Activated CD8-positive, alpha-beta memory T cell treated with anti-CD3 and anti-CD28 coated beads, Interleukin-2, amount 10 ng/mL, durations not matched to agents 7 days and 5 days (primary cell): ENCODE measurements at regions of chr10 and their contacts with region 1.

Region 1: GRCh38 chr10:95246579-95247051 is 44.2 kb downstream of the PDLIM1 start:
- DNase-seq: peak; percentile 82
- ATAC-seq: peak; percentile 70
- H3K4me3 Mint-ChIP-seq: no peak overlapping the region
- H3K27ac Mint-ChIP-seq: peak overlapping the region; percentile 16
- H3K4me1 Mint-ChIP-seq: peaks cover 37% of the 10 kb centered on the region
- H3K27me3 Mint-ChIP-seq: peaks cover 13% of the 10 kb centered on the region

Region 2: DNA sequence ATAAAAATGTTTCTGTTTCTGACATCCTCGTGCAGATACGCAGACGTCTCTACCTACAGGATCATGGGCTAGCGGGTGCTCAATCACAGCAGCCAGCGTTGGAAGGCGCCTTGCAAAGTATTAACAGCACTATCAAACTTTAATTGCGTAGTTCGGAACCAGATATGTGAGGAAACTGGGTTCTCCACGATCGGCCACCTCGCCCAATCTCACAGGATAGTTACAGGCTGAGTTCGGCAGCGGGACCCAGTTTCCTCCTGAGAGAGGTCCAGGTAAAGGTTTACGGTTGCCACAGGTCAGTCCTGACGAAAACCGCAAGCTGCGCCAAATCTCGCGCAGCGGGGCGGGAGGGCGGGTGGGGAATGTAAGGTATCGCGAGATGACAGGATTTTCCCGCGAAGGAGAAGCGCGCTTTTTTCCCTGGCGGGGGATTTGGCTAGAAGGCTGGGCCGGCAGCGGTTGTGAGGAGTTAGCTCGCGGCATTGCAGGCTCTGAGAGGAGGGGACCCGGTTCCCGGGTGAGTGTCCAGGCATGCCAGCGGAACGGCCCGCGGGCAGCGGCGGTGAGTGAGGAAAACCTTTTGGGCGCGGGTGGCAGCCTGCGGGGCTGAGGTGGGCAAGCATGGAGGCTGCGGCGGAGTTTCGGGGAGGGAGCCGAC is 701.1 kb before region 1 on chr10 and contains the start of gene HELLS:
- CTCF ChIA-PET with region 1: no interaction called
- DNase-seq: peak; percentile 87
- ATAC-seq: peak; percentile 78
- H3K4me3 Mint-ChIP-seq: peak within 1 kb of the TSS; percentile 99
- H3K27ac Mint-ChIP-seq: peak within 1 kb of the TSS; percentile 97
- H3K4me1 Mint-ChIP-seq: peaks cover 28% of the 10 kb centered on the region
- H3K27me3 Mint-ChIP-seq: peaks cover 15% of the 10 kb centered on the region
- total RNA-seq, gene HELLS: 152 to 157 TPM

Region 3: DNA sequence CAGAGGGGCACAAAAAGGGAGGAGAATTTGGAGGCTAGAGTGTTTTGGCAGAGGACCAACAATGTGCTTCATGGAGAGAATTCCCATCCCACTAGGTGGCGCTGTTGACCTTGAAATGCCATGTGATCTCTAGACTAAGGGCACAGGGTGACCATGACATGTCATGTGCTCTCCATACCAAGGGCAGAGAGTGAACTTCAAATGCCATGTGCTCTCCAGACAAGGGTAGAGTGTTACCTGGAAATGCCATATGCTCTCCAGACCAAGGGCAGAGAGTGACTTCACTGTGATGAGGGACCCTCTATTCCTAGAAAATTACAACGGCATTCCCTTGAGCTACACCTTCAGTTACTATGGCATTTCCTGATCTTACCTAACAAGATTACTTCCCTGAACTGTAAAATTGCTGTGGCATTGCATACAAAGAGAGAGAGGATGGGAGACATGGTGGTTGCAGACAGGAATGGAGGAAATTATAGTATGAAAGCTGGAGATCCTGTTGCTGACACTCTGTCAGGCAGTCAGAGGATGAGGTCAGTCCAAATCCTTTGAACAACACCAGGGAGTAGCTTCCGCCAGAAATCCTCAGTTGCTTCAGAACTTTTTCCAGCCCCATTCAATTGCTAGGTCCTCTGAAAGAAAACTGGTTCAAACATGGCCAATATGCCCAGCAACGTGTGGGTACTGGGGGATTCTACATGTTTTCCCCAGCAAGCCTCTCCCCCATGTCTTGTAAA is 113.4 kb before region 1 on chr10:
- CTCF ChIA-PET with region 1: interaction called, 10 read pairs
- DNase-seq: peak; percentile 86
- ATAC-seq: peak; percentile 84
- H3K4me3 Mint-ChIP-seq: no peak overlapping the region
- H3K27ac Mint-ChIP-seq: no peak overlapping the region
- H3K4me1 Mint-ChIP-seq: no peaks in the 10 kb centered on the region
- H3K27me3 Mint-ChIP-seq: no peaks in the 10 kb centered on the region

Region 4: DNA sequence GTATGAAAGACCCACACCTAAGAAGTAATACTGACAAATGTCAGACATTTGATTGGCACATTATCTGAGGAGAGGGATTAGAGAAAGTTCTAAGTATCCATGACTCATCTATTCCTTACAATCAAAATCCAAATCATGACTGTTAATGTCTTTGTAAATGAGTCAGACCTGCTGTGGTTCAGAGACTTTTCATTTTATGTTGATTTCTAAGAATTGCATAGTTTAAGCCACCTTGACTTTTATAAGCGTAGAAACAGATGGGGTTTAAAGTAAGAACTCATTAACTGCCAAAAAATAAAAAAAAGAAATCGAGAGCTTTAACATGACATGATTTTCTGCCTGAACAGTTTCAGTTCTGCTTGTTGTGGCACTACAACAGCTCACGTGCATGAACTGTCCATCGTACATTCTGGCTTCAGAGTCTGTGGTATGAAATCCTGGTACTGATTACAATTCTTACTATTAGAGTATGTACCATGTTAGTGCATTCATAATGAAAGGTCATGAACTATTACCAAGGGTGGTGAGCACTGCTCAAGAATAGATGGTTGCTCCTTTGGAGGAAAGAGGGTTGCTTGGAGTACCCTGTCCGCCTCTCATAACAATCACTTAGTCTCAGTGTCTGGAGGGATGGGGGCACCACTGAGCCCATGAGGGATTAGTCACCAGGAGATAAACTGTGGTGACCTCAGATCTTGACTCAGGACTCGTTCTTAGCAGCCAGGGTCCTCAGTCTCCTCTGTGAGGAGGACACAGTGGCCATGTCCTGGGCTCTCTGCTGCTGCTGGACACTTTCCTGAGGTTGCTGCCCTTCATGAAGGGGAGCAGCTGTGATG is 10.3 kb before region 1 on chr10:
- CTCF ChIA-PET with region 1: interaction called, 38 read pairs
- DNase-seq: peak; percentile 51
- ATAC-seq: peak; percentile 82
- H3K4me3 Mint-ChIP-seq: peak overlapping the region; percentile 27
- H3K27ac Mint-ChIP-seq: peak overlapping the region; percentile 88
- H3K4me1 Mint-ChIP-seq: peaks cover 36% of the 10 kb centered on the region
- H3K27me3 Mint-ChIP-seq: peaks cover 3% of the 10 kb centered on the region

Region 5: DNA sequence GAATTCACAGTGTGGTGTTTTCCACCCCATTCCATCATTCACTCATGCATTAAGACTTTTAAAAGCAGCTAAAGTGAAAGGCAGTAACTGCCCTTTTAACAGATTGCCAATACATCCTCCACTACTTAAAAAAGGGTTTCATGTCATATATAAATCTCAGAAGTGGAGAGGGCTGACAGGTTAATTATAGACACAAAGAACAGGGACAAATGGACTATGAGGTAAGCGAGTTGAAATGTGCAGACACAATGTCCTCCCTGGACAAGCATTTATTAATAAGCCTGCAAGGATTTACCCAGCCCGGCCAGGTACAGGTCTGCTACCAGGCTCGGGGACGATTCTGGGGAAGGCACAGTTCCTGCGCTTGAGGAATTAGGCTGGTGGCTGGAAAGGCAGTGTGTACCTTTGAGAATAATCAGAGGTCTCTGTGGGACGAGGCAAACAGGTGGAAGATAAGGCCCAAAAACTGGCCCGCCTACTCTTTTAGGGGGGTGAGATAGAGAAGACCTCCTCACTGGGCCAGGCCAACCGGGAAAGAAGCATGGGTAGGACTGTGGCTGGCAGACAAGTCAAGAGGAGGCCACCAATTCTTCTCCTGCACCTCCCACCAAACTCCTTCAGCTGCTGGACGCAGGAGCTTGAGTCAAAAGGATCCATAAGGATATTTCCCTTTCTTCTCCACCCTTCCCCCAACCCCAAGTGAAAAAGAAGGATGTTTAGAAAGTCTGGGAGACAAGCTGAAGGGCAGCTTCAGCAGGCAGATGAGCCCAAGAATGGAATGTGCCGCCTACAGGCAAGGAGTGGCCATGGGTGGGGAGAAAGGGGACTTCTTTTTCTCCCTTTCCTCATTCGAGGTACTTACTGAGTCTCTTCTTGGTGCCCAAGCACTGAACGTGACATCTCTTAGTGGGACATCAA is 42.6 kb after region 1 on chr10:
- CTCF ChIA-PET with region 1: interaction called, 29 read pairs
- DNase-seq: no peak
- ATAC-seq: no peak
- H3K4me3 Mint-ChIP-seq: peak overlapping the region; percentile 72
- H3K27ac Mint-ChIP-seq: no peak overlapping the region
- H3K4me1 Mint-ChIP-seq: peaks cover 32% of the 10 kb centered on the region
- H3K27me3 Mint-ChIP-seq: peaks cover 60% of the 10 kb centered on the region

Region 6: GRCh38 chr10:95350219-95350829 is 103.7 kb after region 1 on chr10:
- CTCF ChIA-PET with region 1: interaction called, 14 read pairs
- DNase-seq: no peak
- ATAC-seq: no peak
- H3K4me3 Mint-ChIP-seq: no peak overlapping the region
- H3K27ac Mint-ChIP-seq: no peak overlapping the region
- H3K4me1 Mint-ChIP-seq: no peaks in the 10 kb centered on the region
- H3K27me3 Mint-ChIP-seq: peaks cover 10% of the 10 kb centered on the region

Region 7: DNA sequence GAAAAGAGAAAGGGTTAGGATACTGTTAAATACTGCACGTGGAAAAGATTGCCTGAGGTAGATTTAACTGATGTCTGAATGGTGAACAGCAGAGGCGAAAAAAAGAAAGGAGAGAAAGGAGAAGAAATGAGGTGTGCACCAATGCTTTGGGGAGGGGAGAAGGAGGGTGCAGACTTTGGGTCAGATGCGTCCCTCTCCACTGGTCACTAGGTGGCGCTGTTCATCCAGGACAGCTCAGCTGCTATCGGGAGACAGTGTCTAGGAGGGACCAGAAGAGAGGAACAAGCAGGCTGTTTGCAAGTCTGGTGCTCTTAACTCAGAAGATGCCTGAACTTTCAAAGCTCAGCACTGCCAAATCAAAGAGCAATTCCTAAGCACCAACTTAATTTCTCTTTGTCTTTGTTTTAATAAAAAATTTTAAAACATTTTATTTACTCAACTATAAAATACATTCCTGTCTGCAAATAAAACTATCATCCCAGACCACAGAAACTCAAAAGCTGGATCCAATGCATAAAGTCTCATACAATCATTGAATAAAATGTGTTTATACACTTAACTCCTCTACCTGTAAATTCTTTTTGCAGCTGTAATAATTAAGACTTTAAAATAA is 128.1 kb after region 1 on chr10:
- CTCF ChIA-PET with region 1: interaction called, 15 read pairs
- DNase-seq: peak; percentile 85
- ATAC-seq: peak; percentile 96
- H3K4me3 Mint-ChIP-seq: no peak overlapping the region
- H3K27ac Mint-ChIP-seq: no peak overlapping the region
- H3K4me1 Mint-ChIP-seq: peaks cover 7% of the 10 kb centered on the region
- H3K27me3 Mint-ChIP-seq: peaks cover 46% of the 10 kb centered on the region